AG04449 (cell line): ENCODE measurements at regions of chr7 and their contacts with region 1.

Region 1: GRCh38 chr7:99312316-99313203 is 13.1 kb upstream of the ARPC1A start:
- DNase-seq: no peak
- H3K4me3 ChIP-seq: no peak overlapping the region
- CTCF ChIP-seq: peak; percentile 76

Region 2: GRCh38 chr7:99001482-99002145 is 310.9 kb before region 1 on chr7:
- CTCF ChIA-PET with region 1: interaction called, 11 read pairs
- POLR2A ChIA-PET with region 1: no interaction called
- DNase-seq: no peak
- H3K4me3 ChIP-seq: no peak overlapping the region
- CTCF ChIP-seq: no peak

Region 3: DNA sequence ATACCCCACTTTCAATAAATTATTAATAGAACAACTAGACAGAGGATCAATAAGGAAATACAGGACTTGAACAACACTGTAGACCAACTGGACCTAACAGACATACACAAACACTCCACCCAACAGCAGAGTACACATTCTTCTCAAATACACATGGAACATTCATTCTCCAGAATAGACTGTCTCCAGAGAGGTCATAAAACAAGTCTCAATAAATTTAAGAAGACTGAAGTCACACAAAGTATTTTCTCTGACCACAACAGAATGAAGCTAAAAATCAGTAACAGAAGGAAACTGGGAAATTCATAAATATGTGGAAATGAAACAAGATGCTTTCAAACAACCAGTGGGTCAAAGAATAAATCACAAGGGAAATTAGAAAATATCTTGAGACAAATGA is 288.5 kb before region 1 on chr7:
- CTCF ChIA-PET with region 1: interaction called, 21 read pairs
- POLR2A ChIA-PET with region 1: no interaction called
- DNase-seq: peak; percentile 54
- H3K4me3 ChIP-seq: no peak overlapping the region
- CTCF ChIP-seq: no peak

Region 4: DNA sequence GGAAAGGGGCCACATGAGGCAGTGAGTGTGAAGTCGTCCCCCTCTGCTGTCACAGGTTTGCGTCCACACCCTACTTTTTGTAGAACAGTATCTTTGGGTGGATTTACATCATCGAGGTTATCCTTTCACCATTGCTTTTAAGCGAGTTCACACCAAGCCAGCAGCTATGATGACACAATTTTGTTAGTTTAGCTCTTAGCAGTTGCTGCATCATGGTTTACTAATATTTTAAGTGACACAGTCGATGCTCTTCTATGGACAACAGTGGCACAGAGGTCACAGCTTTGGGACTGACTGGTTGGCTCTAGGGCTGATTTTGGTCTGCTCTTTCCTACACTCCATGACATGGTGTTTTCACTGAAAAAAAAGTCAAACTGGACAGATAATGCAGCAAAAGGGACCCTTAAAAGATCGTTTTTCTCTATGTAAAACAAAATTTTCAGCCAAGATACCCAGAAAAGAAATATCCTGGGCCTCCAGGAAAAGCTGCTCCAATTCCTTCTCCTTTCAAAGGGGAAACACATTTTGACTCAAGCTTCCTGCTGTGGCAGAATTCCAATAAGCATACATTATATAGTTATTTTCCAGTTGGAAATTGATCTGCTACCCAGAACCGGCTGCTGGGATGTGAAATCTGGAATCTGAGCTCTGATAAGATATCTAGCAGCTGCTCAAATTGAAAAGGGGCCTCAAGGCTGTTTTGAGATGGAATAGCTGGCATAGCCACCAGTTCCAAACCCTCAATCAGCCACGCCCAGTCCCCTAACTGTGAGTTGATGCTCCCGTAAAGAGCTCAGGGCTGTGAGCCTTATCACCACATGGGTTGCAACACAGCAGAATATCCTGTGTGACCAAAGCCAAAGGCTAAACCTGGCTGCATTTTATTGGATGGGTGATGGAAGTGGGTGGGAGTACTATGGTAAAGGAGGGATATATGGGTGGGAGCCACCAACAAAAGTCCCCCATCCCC is 282.8 kb before region 1 on chr7:
- CTCF ChIA-PET with region 1: interaction called, 217 read pairs
- POLR2A ChIA-PET with region 1: no interaction called
- DNase-seq: no peak
- H3K4me3 ChIP-seq: no peak overlapping the region
- CTCF ChIP-seq: no peak

Region 5: DNA sequence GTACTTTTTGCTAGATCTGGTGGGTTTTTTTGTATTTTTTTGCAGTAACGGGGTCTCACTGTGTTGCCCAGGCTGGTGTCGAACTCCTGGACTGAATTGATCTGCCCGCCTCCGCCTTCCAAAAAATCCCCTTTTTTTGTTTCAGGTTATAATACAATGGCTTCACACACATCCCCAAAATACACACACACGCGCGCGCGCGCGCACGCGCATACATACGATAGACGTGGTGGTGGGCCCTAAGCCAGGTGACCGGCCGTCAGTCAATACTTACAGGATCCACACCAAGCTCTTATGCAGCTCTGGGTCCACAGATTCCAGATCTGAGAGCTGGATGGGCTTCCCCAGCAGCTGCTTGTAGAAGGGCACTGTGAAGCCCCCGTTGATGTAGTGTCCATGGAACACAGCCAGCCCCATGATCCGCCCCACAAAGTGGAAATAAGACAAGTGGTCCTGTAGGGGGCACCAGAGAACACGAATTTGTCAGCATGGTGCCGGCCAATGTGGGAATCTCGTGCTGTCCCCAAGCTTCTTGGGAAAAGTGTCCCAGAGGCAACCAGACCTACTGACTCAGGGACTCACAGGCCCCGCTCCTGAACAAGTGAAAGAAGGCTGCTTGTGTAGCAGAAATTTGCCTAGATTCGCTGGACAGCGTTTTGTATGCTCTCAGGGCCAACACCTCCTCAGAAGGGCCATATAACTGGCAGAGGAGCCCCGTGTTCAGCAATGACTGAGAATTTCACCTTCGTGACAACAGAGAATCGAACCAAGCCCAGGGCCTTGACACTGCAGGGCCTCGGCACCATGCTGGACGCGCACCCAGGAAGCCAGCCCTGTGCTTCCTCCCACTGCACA is 272.2 kb before region 1 on chr7:
- CTCF ChIA-PET with region 1: interaction called, 217 read pairs
- POLR2A ChIA-PET with region 1: no interaction called
- DNase-seq: peak; percentile 24
- H3K4me3 ChIP-seq: no peak overlapping the region
- CTCF ChIP-seq: peak; percentile 67

Region 6: GRCh38 chr7:99123571-99124041 is 189.0 kb before region 1 on chr7:
- CTCF ChIA-PET with region 1: no interaction called
- POLR2A ChIA-PET with region 1: no interaction called
- DNase-seq: no peak
- H3K4me3 ChIP-seq: no peak overlapping the region
- CTCF ChIP-seq: no peak

Region 7: DNA sequence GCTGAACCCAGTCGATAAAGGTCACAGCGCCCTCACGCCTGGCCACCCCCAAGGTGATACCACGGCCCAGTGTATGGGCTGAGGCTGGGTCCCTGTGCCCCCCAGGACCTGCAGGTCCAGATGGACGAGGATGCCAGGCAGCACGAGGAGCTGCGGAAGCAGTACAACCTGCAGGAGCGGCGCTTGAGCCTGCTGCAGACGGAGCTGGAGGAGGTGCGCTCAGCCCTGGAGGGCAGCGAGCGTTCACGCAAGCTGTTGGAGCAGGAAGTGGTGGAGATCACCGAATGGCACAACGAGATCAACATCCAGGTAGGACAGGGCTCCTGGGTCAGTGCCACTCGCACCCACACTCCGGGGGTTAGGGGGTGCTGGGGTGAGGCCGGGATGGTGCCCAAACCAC is 11.1 kb before region 1 on chr7:
- CTCF ChIA-PET with region 1: interaction called, 13 read pairs
- POLR2A ChIA-PET with region 1: no interaction called
- DNase-seq: no peak
- H3K4me3 ChIP-seq: no peak overlapping the region
- CTCF ChIP-seq: no peak

Region 8: DNA sequence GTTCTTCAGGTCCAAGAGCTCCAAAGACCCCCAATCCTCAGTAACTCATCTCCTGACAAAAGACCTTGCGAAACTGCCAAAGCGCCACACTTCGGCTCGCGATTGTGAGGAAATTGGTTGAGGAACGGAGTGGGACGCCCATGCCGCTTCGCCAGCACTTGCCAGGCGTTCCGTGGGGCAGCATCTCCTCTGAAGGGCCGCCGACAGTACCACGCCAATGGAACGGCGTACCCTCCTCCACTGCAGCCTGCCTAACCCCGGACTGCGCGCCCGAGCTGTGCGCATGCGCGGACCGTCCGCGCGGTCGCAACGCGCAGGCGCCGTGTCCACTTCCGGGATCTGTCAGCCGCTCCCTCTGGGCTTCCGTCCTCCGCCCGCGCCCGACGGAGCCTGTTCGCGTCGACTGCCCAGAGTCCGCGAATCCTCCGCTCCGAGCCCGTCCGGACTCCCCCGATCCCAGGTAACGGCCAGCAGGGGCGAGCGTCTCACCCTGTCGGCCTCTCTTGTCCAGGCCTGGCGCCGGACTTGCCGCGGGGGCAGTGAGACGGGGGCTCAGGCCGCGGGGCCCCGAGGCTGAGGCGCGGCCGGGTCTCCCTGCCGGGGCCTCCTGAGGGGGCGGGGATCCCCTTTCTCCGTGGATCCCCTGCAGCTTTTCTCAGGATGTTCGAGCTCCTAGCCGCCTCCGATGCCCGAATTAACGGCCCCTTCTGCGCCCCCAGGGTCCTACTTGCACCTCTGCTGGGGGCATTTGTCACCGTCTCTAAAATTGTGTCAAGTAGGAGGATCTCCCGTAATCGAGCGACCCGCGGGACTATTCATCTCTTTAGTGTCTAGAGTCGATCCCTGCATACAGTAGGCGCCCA is 13.2 kb after region 1 on chr7 and contains the start of gene ARPC1A:
- CTCF ChIA-PET with region 1: interaction called, 68 read pairs
- POLR2A ChIA-PET with region 1: interaction called, 4 read pairs
- DNase-seq: peak; percentile 38
- H3K4me3 ChIP-seq: peak within 1 kb of the TSS; percentile 98
- CTCF ChIP-seq: peak; percentile 61